Panc1 (cell line): ENCODE measurements at regions of chr1 and their contacts with region 1.

Region 1: GRCh38 chr1:27951396-27951795 is 8.4 kb upstream of the XKR8 start:
- DNase-seq: no peak
- ATAC-seq: no peak
- H3K4me3 ChIP-seq: no peak overlapping the region
- H3K27ac ChIP-seq: no peak overlapping the region
- H3K4me1 ChIP-seq: no peaks in the 10 kb centered on the region
- H3K27me3 ChIP-seq: no peaks in the 10 kb centered on the region
- CTCF ChIP-seq: no peak

Region 2: GRCh38 chr1:27772933-27773825 is 178.2 kb before region 1 on chr1 and contains the start of gene STX12:
- CTCF ChIA-PET with region 1: no interaction called
- POLR2A ChIA-PET with region 1: no interaction called
- in situ Hi-C with region 1: no loop called
- intact Hi-C with region 1: no loop called
- DNase-seq: peak; percentile 98
- ATAC-seq: peak; percentile 99
- H3K4me3 ChIP-seq: peak within 1 kb of the TSS; percentile 84 to 88
- H3K27ac ChIP-seq: peak within 1 kb of the TSS; percentile 83
- H3K4me1 ChIP-seq: peaks cover 6% of the 10 kb centered on the region; the same call in 1 of the 2 replicates
- H3K27me3 ChIP-seq: no peaks in the 10 kb centered on the region
- CTCF ChIP-seq: no peak
- total RNA-seq, gene STX12: 25.3 TPM

Region 3: GRCh38 chr1:27906759-27907158 is 44.6 kb before region 1 on chr1:
- CTCF ChIA-PET with region 1: no interaction called
- POLR2A ChIA-PET with region 1: interaction called, 27 read pairs
- in situ Hi-C with region 1: no loop called
- intact Hi-C with region 1: no loop called
- DNase-seq: no peak
- ATAC-seq: no peak
- H3K4me3 ChIP-seq: no peak overlapping the region
- H3K27ac ChIP-seq: no peak overlapping the region
- H3K4me1 ChIP-seq: no peaks in the 10 kb centered on the region
- H3K27me3 ChIP-seq: no peaks in the 10 kb centered on the region
- CTCF ChIP-seq: no peak